Activated CD8-positive, alpha-beta memory T cell treated with anti-CD3 and anti-CD28 coated beads, Interleukin-2, amount 10 ng/mL, durations not matched to agents 7 days and 5 days (primary cell): ENCODE measurements at regions of chr10 and their contacts with region 1.

Region 1: GRCh38 chr10:7818295-7819122 is at the start of gene TAF3:
- DNase-seq: peak; percentile 95
- ATAC-seq: peak; percentile 88
- H3K4me3 Mint-ChIP-seq: peak within 1 kb of the TSS; percentile 99
- H3K27ac Mint-ChIP-seq: peak within 1 kb of the TSS; percentile 89
- H3K4me1 Mint-ChIP-seq: peaks cover 35% of the 10 kb centered on the region
- H3K27me3 Mint-ChIP-seq: no peaks in the 10 kb centered on the region
- total RNA-seq, gene TAF3: 15.6 to 15.8 TPM

Region 2: DNA sequence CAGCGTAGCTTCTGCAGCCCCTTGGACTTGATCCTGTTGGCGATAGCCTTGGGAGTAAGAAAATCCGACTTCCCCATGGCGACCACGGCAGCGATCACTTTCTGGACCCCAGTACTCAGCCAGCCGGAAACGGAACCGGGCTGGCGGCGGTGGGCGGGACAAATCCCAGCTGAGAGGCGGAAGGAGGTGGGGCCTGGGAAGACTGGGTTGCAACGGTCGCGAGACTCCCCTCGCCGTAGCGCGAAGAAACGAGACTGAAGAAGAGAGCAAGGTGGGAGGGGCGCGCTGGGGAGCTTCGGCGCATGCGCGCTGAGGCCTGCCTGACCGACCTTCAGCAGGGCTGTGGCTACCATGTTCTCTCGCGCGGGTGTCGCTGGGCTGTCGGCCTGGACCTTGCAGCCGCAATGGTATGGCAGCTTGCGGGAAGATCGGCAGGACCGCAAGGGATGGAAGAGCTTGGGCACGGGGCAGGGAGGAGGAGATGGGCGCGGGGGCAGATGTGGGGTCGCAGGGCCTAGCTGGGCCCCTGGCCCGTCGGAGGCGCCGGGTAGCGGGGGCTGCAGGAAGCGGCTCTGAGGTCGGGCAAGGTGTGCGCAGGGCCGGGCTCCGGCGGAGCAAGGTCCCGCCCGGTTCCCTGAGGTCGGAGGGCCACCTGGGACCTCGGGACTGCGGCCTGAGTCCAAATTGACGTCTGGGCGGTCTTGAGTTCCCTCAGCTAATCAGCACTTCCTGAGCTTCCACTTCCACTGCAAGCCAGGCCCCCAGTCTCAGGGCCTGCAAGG is 30.5 kb before region 1 on chr10 and contains the starts of genes ATP5F1C and KIN:
- CTCF ChIA-PET with region 1: interaction called, 26 read pairs
- DNase-seq: peak; percentile 99
- ATAC-seq: peak; percentile 94
- H3K4me3 Mint-ChIP-seq: no peak within 1 kb of the TSS
- H3K27ac Mint-ChIP-seq: no peak within 1 kb of the TSS
- H3K4me1 Mint-ChIP-seq: peaks cover 57% of the 10 kb centered on the region
- H3K27me3 Mint-ChIP-seq: no peaks in the 10 kb centered on the region
- total RNA-seq, gene ATP5F1C: 285 to 287 TPM
- total RNA-seq, gene KIN: 12.9 to 15.0 TPM